ENCODE measurements at regions of chr18 and their contacts with region 1.

Region 1: GRCh38 chr18:62249478-62250097 is 62.5 kb downstream of the RELCH start:
- DNase-seq: peak; percentile 19
- H3K4me3 ChIP-seq: no peak overlapping the region
- CTCF ChIP-seq: peak; percentile 76

Region 2: DNA sequence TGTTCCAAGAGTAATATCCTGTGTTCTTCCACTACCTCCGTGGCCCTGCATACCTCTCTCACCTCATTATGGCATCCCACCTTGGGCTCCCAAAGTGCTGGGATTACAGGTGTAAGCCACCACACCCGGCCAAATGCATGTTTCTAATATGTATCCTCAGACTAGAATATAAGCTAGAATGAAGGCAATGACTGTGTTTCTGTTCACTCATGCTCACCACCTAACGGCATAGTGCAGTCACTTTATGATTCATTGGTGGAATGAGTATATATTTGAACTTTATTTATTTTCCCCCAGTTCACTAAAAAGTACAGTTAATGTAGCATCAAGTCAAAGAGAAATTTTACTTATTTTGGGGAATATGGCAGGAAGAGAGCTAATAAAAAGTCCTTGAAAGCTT is 74.1 kb before region 1 on chr18:
- CTCF ChIA-PET with region 1: interaction called, 27 read pairs
- POLR2A ChIA-PET with region 1: no interaction called
- DNase-seq: no peak
- H3K4me3 ChIP-seq: no peak overlapping the region
- CTCF ChIP-seq: no peak

Region 3: GRCh38 chr18:62198259-62198658 is 51.3 kb before region 1 on chr18:
- CTCF ChIA-PET with region 1: interaction called, 22 read pairs
- POLR2A ChIA-PET with region 1: no interaction called
- DNase-seq: no peak
- H3K4me3 ChIP-seq: no peak overlapping the region
- CTCF ChIP-seq: no peak

Region 4: GRCh38 chr18:62239475-62239874 is 10.1 kb before region 1 on chr18:
- CTCF ChIA-PET with region 1: interaction called, 17 read pairs
- POLR2A ChIA-PET with region 1: no interaction called
- DNase-seq: no peak
- H3K4me3 ChIP-seq: no peak overlapping the region
- CTCF ChIP-seq: no peak

Measured in AG04449 (cell line).